Aorta (tissue), 5 donors: ENCODE measurements at regions of chr4 and their contacts with region 1.

Region 1: DNA sequence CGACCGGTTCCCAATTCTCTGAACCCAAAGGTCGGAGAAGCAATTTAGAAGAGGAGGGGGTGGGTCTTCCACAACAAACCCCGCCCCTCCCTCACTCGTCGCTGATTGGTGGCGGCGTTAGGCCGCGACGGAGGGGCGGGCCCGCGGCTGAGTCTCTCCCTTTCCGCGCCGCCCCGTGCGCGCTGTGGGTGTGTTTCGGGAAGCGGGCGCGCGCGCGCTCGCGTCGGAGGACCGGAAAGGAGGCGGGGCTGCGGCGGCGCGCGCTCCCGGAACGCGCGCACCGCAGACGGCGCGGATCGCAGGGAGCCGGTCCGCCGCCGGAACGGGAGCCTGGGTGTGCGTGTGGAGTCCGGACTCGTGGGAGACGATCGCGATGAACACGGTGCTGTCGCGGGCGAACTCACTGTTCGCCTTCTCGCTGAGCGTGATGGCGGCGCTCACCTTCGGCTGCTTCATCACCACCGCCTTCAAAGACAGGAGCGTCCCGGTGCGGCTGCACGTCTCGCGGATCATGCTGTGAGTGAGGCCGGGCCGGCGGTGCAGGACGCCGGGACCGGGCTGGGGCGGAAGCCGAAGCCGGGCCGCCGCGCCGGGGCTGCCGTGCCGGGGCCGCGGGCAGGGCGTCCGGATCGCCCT is at the start of gene SPCS3:
- DNase-seq: peak; percentile 98 to 99
- ATAC-seq: peak; percentile 99
- H3K4me3 ChIP-seq: peak within 1 kb of the TSS; percentile 88 to 92
- H3K27ac ChIP-seq: peak within 1 kb of the TSS; percentile 92 to 97
- H3K4me1 ChIP-seq: no peaks in the 10 kb centered on the region
- H3K27me3 ChIP-seq: no peaks in the 10 kb centered on the region
- total RNA-seq, gene SPCS3: 124 to 168 TPM

Region 2: DNA sequence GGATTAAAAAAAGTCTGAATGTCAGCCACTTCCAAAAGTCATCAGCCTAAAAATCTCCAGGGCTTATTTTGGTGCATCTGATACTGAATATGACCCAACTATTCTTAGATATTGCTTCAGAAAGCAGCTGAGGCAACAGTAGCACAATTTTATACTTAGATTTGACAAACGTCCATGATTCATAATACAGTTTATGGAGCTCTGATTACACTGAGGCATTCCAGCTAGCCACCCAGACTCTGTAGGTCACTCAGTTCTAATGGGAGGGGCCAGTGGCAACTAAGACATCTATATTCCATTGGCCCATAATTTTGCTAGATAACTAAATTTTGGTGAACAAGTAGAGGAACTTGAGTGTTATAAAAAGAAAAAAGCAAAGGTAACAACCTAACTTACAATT is 134.8 kb before region 1 on chr4:
- intact Hi-C with region 1: loop called in 1 of 2 experiments (anchors 5 kb)
- DNase-seq: no peak
- ATAC-seq: peak; percentile 78
- H3K4me3 ChIP-seq: no peak overlapping the region
- H3K27ac ChIP-seq: no peak overlapping the region
- H3K4me1 ChIP-seq: peaks cover 2 to 3% of the 10 kb centered on the region in 2 donors
- H3K27me3 ChIP-seq: no peaks in the 10 kb centered on the region

Region 3: DNA sequence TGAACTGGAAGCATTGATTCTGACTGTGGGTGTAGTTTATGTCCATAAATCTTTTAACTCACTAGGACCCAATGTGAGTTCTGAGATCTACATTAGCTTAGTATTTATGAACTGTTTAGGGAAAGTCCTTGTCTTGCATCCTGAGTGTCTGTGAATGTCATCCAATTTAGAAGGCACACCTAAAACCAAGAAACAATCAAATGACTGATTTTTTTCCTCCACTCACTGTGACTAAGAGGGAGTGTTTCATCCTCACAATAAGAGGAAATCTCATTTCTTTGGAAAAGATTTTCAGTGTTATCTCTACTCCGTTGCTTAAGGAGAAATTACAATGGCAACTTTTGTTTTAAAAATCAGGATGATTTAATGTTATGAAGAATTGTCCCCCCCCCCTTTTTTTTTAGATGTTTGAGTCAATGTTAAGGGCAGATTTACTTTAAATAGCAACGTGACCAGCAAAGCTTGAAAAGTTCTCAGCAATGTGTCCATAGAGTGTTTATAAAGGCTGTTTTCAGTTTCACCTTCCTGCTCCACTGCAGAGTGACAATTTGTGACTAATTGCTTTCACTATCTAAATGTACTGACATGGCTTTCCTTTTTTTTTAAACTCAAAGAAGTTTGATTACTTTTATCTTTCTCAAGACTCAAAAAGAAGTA is 173.0 kb after region 1 on chr4:
- intact Hi-C with region 1: no loop called
- DNase-seq: no peak
- ATAC-seq: no peak
- H3K4me3 ChIP-seq: no peak overlapping the region
- H3K27ac ChIP-seq: no peak overlapping the region
- H3K4me1 ChIP-seq: no peaks in the 10 kb centered on the region
- H3K27me3 ChIP-seq: no peaks in the 10 kb centered on the region